Ascending aorta (tissue), 2 donors: ENCODE measurements at regions of chr6 and their contacts with region 1.

Region 1: DNA sequence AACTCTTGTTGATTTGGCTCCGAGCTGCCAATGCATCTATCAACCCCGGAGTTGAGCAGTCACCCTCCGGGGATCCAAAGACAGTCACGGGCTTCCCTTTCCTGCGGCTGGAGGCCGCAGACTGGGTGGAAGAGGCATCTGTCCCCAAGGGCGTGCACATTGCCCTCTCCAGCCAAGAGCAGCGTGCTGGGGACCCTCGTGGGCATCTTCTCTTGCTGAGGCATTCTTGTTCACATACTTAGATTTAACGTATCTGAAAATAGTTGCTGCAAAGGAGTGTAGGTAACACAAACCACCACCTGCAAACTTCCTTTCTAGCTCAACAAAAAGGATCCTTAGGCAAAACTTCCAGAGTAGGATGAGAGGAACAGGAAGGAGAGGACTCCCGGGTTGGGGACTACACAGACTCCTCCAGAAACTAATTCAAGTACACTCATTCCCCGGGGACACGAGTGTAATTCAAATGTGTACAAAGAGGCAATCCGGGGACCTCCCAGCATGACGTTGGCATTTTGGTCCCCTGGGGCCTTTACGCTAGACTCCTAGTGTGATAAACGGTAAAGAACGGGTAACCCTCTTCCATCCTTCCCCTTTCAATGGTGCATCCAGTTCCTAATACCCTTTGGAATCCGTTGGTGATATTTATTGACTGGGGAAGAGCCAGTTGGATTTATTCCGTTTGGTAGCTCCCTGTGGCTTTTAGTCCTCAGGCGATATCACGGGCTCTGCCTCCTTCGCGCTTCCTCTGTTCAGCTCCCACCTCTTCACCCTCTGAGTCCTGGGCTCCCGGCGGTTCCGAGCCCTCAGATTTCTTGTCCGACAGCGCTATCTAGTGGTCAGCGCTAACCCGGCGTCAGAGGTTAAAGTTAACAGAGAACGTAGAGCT is 2.7 kb upstream of the COL12A1 start:
- DNase-seq: peak; percentile 35 to 94
- H3K4me3 ChIP-seq: peak overlapping the region; percentile 41 to 56
- H3K27ac ChIP-seq: peak overlapping the region; percentile 64 to 68
- H3K4me1 ChIP-seq: peaks cover 7 to 19% of the 10 kb centered on the region in 2 donors
- H3K27me3 ChIP-seq: no peaks in the 10 kb centered on the region
- CTCF ChIP-seq: peak; percentile 78 to 87 (median 84)

Region 2: GRCh38 chr6:73653571-73654424 is 1554.7 kb before region 1 on chr6 and contains the start of gene SLC17A5:
- intact Hi-C with region 1: loop called (anchors 10 kb)
- DNase-seq: peak; percentile 88 to 98
- H3K4me3 ChIP-seq: peak within 1 kb of the TSS; percentile 91 to 100
- H3K27ac ChIP-seq: peak within 1 kb of the TSS; percentile 97 to 98
- H3K4me1 ChIP-seq: peaks cover 0 to 4% of the 10 kb centered on the region in 2 donors
- H3K27me3 ChIP-seq: no peaks in the 10 kb centered on the region
- CTCF ChIP-seq: no peak
- total RNA-seq, gene SLC17A5: 23.2 TPM

Region 3: DNA sequence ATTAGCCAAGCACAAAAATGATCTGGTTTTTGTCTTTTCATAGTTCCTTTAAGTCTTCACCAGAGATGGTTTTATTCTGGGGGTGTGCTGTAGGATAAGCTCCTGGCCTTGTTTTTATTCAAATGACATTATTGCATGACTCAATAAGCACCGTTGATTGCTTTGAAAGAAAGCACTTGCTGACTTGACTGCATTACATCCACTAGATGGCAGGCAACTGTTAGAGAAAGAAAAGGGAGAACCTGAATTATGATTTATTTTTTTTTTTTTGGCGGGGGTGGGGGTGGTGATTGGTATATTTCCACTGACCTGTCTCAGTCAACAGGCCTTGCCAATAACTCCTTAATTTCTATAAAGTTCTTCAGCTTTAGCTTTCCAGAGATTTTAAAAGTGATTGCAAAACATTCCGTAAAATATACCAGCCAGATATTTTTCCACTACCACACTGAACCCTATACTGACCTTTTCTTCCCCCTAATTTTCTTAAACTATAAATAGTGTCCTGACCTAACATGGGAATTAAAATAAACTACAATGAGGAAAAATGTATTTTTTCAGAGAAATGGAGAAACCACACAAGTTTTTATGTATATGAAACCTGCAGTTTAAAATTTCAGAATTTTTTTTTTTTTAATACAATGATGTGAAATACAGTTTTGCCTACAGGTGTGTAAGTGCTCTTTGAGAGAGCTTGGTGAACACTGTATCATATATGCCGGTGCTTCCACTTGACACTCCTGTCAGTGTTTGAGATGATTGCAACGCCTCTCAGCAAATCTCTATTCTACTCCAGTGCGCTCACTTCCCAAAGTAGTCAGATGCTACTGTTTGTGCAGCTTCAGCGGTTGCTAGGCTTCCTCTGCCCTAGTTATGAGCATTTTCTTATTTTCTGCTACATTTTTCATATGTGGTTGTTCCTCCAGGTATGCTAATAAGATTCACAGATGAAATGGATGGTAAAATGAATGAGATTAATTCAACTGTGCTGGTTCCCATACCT is 1238.3 kb before region 1 on chr6:
- intact Hi-C with region 1: loop called (anchors 5 kb)
- DNase-seq: no peak
- H3K4me3 ChIP-seq: no peak overlapping the region
- H3K27ac ChIP-seq: no peak overlapping the region
- H3K4me1 ChIP-seq: no peaks in the 10 kb centered on the region
- H3K27me3 ChIP-seq: no peaks in the 10 kb centered on the region
- CTCF ChIP-seq: peak; percentile 15 to 56 (median 32)

Region 4: GRCh38 chr6:74409447-74409846 is 799.1 kb before region 1 on chr6:
- intact Hi-C with region 1: loop called (anchors 2 kb)
- DNase-seq: no peak
- H3K4me3 ChIP-seq: no peak overlapping the region
- H3K27ac ChIP-seq: no peak overlapping the region
- H3K4me1 ChIP-seq: no peaks in the 10 kb centered on the region
- H3K27me3 ChIP-seq: no peaks in the 10 kb centered on the region
- CTCF ChIP-seq: peak; percentile 9 to 51 (median 39)

Region 5: DNA sequence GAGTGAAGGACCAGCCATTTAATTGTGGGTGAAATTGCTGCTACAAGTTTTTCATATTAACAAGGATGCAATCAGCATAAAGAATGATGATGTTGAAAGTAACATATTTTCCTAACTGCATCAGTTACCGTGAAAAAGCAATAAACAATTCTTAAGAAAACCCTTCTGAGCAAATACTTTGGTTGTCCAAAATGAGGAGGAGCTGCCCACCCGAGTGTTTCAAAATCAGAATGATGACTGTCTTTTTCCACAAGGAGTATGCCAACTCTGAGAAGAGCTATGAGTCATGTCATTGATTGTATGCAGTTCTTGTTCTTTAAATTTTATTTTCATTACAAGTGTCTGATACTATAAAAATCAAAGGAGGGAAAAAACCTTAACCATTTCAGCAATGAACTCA is 473.2 kb before region 1 on chr6:
- intact Hi-C with region 1: loop called (anchors 5 kb)
- DNase-seq: peak in 1 of 2 donors; percentile 70
- H3K4me3 ChIP-seq: no peak overlapping the region
- H3K27ac ChIP-seq: peak overlapping the region in 1 of 2 donors; percentile 59
- H3K4me1 ChIP-seq: no peaks in the 10 kb centered on the region
- H3K27me3 ChIP-seq: no peaks in the 10 kb centered on the region
- CTCF ChIP-seq: no peak

Region 6: DNA sequence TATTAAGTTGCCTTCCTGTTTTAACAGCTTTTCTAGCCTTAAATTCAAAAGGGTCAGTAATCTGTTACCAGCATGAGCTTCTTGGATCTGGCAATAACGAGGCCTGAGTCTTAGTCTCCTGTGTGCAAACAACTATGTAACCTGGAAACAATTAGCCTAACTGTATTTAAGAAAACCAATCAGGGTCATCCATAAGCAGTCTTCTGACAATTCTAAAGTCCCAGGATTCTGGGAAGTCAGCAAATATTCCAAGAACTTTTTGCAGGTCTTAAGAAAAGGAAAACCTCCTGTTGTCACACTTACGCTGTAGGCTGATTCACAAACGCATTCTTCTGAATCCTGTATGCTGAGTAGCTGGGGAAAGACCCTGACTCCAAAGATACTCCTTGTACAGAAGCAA is 93.1 kb before region 1 on chr6:
- intact Hi-C with region 1: loop called (anchors 5 kb)
- DNase-seq: no peak
- H3K4me3 ChIP-seq: peak overlapping the region in 1 of 2 donors; percentile 35
- H3K27ac ChIP-seq: peak overlapping the region; percentile 52 to 66
- H3K4me1 ChIP-seq: peaks cover 0 to 11% of the 10 kb centered on the region in 2 donors
- H3K27me3 ChIP-seq: no peaks in the 10 kb centered on the region
- CTCF ChIP-seq: no peak